ENCODE measurements at regions of chr1 and their contacts with region 1.

Region 1: GRCh38 chr1:15304701-15305467 is 57.9 kb downstream of the FHAD1 start:
- DNase-seq: peak; percentile 37 to 70 (median 62)
- H3K4me3 ChIP-seq: no peak overlapping the region
- H3K4me3 Mint-ChIP-seq: no peak overlapping the region
- H3K27ac ChIP-seq: no peak overlapping the region
- H3K27ac Mint-ChIP-seq: no peak overlapping the region
- H3K4me1 ChIP-seq: peaks cover 0 to 2% of the 10 kb centered on the region in 2 donors
- H3K4me1 Mint-ChIP-seq: peaks cover 4% of the 10 kb centered on the region
- H3K27me3 ChIP-seq: no peaks in the 10 kb centered on the region
- H3K27me3 Mint-ChIP-seq: peaks cover 0 to 5% (median 5%) of the 10 kb centered on the region in 3 donors
- CTCF ChIP-seq: peak; percentile 98

Region 2: DNA sequence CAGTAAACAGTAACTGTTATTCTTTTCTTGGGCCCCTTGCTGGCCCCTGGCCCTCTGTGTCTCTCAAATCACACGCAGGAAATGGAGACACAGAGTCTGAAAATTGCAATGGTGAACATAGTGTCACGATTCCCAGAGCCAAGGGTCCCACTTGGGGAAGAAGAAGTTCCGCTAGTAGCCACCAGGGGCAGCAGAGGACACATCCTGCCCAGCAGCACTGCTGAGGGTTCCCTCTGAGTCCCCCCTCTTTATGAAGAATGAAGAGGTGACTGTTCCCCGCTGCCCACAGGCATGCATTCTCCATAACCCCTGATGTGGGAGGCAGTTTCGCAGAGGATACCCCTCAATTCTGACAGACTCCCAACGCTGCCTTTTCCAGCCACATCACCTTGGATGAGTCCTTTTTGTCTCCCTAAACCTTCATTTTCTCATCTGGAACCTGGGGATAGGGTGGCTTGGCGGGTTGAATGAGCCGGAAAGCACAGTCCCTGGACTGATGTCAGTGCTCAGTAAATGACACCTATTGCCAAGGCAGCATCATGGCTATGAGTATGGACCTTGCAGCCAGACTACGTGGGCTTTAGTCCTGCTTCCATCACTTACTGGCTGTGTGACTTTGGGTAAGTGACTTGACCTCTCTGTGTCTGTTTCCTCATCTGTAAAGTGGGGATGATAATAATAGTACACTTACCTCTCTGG is 389.4 kb before region 1 on chr1:
- intact Hi-C with region 1: loop called in 1 of 2 experiments (anchors 10 kb)
- DNase-seq: peak; percentile 12 to 35 (median 33)
- H3K4me3 ChIP-seq: no peak overlapping the region
- H3K4me3 Mint-ChIP-seq: no peak overlapping the region
- H3K27ac ChIP-seq: no peak overlapping the region
- H3K27ac Mint-ChIP-seq: peak overlapping the region in 1 of 7 donors; percentile 66
- H3K4me1 ChIP-seq: no peaks in the 10 kb centered on the region
- H3K4me1 Mint-ChIP-seq: no peaks in the 10 kb centered on the region
- H3K27me3 ChIP-seq: no peaks in the 10 kb centered on the region
- H3K27me3 Mint-ChIP-seq: peaks cover 0 to 7% (median 1%) of the 10 kb centered on the region in 3 donors
- CTCF ChIP-seq: peak; percentile 96

Region 3: DNA sequence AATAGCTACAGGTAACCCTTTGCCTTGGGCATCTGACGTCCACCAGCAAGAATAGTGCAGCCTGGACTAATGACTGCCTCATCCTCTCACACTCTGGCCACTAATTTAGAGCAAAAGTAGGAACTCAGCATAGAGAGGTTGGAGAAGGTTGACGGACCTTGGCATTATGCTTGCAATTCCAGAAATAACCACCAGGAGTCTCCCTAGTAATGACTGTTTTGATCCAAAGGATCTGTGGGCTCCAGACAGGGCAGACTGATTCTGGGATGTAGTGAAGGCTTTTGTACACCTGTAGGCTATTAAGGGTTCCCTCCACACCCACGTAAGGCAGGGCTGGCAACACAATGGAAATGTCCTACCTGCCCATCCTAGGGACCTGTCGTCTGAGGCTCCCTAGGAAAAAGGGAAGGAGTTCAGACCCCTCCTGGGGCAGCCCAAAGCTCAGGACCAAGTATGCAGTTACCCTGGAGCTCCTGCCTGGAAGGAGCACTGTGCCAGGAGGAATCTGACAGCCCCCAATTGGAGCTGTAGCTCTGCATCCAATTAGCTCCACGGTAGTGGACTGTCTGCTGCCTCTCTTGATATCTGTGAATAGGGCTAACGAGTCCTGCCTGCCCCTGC is 242.3 kb before region 1 on chr1:
- intact Hi-C with region 1: loop called in 1 of 2 experiments (anchors 5 kb)
- DNase-seq: peak in 1 of 3 donors; percentile 18
- H3K4me3 ChIP-seq: no peak overlapping the region
- H3K4me3 Mint-ChIP-seq: no peak overlapping the region
- H3K27ac ChIP-seq: no peak overlapping the region
- H3K27ac Mint-ChIP-seq: no peak overlapping the region
- H3K4me1 ChIP-seq: no peaks in the 10 kb centered on the region
- H3K4me1 Mint-ChIP-seq: no peaks in the 10 kb centered on the region
- H3K27me3 ChIP-seq: no peaks in the 10 kb centered on the region
- H3K27me3 Mint-ChIP-seq: peaks cover 0 to 8% (median 4%) of the 10 kb centered on the region in 3 donors
- CTCF ChIP-seq: peak; percentile 71

Region 4: GRCh38 chr1:15128520-15129313 is 176.2 kb before region 1 on chr1:
- intact Hi-C with region 1: loop called (anchors 1 to 2 kb)
- DNase-seq: peak; percentile 66 to 79 (median 77)
- H3K4me3 ChIP-seq: no peak overlapping the region
- H3K4me3 Mint-ChIP-seq: no peak overlapping the region
- H3K27ac ChIP-seq: no peak overlapping the region
- H3K27ac Mint-ChIP-seq: no peak overlapping the region
- H3K4me1 ChIP-seq: no peaks in the 10 kb centered on the region
- H3K4me1 Mint-ChIP-seq: no peaks in the 10 kb centered on the region
- H3K27me3 ChIP-seq: no peaks in the 10 kb centered on the region
- H3K27me3 Mint-ChIP-seq: peaks cover 2 to 4% (median 3%) of the 10 kb centered on the region in 3 donors
- CTCF ChIP-seq: peak; percentile 85

Region 5: GRCh38 chr1:15288173-15288926 is 16.5 kb before region 1 on chr1:
- intact Hi-C with region 1: no loop called
- DNase-seq: no peak
- H3K4me3 ChIP-seq: no peak overlapping the region
- H3K4me3 Mint-ChIP-seq: no peak overlapping the region
- H3K27ac ChIP-seq: no peak overlapping the region
- H3K27ac Mint-ChIP-seq: no peak overlapping the region
- H3K4me1 ChIP-seq: no peaks in the 10 kb centered on the region
- H3K4me1 Mint-ChIP-seq: no peaks in the 10 kb centered on the region
- H3K27me3 ChIP-seq: no peaks in the 10 kb centered on the region
- H3K27me3 Mint-ChIP-seq: peaks cover 0 to 5% (median 2%) of the 10 kb centered on the region in 3 donors
- CTCF ChIP-seq: no peak

Measured in CD14-positive monocyte (primary cell).